ENCODE measurements at regions of chr11 and their contacts with region 1.

Region 1: DNA sequence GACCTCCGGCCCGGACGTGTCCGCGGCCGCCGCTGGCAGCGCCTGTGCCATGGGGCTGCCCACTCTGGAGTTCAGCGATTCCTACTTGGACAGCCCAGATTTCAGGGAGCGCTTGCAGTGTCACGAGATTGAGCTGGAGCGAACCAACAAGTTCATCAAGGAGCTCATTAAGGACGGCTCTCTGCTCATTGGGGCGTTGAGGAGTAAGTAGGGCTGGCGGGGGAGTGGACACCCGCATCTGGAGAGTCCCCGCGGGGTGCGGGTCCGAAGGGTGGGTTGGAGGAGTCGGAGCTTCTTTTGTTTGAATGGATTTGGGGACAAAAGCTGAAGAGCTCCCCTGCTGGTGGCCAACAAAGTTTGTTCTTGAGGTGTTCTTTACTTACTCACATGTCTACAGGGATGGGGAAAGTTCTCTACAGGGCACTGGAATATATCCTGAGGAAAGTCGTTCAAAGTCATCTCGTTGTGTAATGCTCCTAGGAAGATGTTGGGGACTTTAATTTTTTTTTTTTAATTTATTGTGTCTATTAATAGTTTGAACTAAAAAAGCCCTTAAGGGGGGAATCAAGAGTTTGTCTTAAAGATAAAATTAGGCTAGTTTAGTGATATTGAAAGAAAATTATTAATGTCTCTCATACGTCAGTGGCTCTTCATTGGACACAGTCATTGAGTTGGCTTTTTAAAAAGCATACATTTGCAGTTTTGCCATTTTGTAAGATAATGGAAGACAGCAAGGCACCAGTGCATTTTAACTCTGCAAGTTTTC is 725 bp downstream of the ARHGAP42 start:
- ATAC-seq: peak; percentile 63 to 75 (median 70)
- H3K4me3 ChIP-seq: peak overlapping the region; percentile 60 to 94 (median 75)
- H3K27ac ChIP-seq: no peak overlapping the region
- H3K4me1 ChIP-seq: peaks cover 4 to 7% of the 10 kb centered on the region in 2 donors

Region 2: GRCh38 chr11:100581318-100581717 is 106.5 kb before region 1 on chr11:
- in situ Hi-C with region 1: no loop called
- ATAC-seq: no peak
- H3K4me3 ChIP-seq: no peak overlapping the region
- H3K27ac ChIP-seq: no peak overlapping the region
- H3K4me1 ChIP-seq: no peaks in the 10 kb centered on the region

Region 3: GRCh38 chr11:100855466-100856067 is 167.8 kb after region 1 on chr11:
- in situ Hi-C with region 1: loop called in 2 of 9 experiments (anchors 25 kb)
- ATAC-seq: peak in 1 of 8 experiments; percentile 16
- H3K4me3 ChIP-seq: no peak overlapping the region
- H3K27ac ChIP-seq: no peak overlapping the region
- H3K4me1 ChIP-seq: peaks cover 0 to 21% of the 10 kb centered on the region in 2 donors

Measured in motor neuron (in vitro differentiated cells).